Heart right ventricle (tissue), 16 donors: ENCODE measurements at regions of chr2 and their contacts with region 1.

Region 1: GRCh38 chr2:137838255-137839092 is 125.8 kb upstream of the HNMT start:
- DNase-seq: no peak
- ATAC-seq: peak in 1 of 8 donors; percentile 41
- H3K4me3 ChIP-seq: no peak overlapping the region
- H3K27ac ChIP-seq: no peak overlapping the region
- H3K4me1 ChIP-seq: no peaks in the 10 kb centered on the region
- H3K27me3 ChIP-seq: peaks cover 0 to 17% (median 5%) of the 10 kb centered on the region in 7 donors
- CTCF ChIP-seq: peak; percentile 48 to 76 (median 66)

Region 2: GRCh38 chr2:135913727-135914365 is 1924.6 kb before region 1 on chr2:
- intact Hi-C with region 1: loop called in 1 of 10 experiments (anchors 10 kb)
- DNase-seq: peak in 1 of 2 donors; percentile 29
- ATAC-seq: peak in 1 of 8 donors; percentile 21
- H3K4me3 ChIP-seq: no peak overlapping the region
- H3K27ac ChIP-seq: peak overlapping the region in 1 of 10 donors; percentile 6
- H3K4me1 ChIP-seq: no peaks in the 10 kb centered on the region
- H3K27me3 ChIP-seq: no peaks in the 10 kb centered on the region
- CTCF ChIP-seq: peak; percentile 55 to 86 (median 78)

Region 3: GRCh38 chr2:136423516-136423996 is 1414.9 kb before region 1 on chr2:
- intact Hi-C with region 1: loop called in 9 of 10 experiments (anchors 2 to 10 kb)
- DNase-seq: peak; percentile 46 to 73
- ATAC-seq: peak; percentile 86 to 95 (median 92)
- H3K4me3 ChIP-seq: peak overlapping the region in 9 of 10 donors; percentile 6 to 65 (median 45)
- H3K27ac ChIP-seq: no peak overlapping the region
- H3K4me1 ChIP-seq: peaks cover 0 to 11% (median 7%) of the 10 kb centered on the region in 9 donors
- H3K27me3 ChIP-seq: peaks cover 0 to 40% (median 28%) of the 10 kb centered on the region in 7 donors
- CTCF ChIP-seq: peak; percentile 71 to 90 (median 86)

Region 4: GRCh38 chr2:136874258-136874657 is 964.2 kb before region 1 on chr2:
- intact Hi-C with region 1: loop called in 2 of 10 experiments (anchors 5 to 10 kb)
- DNase-seq: no peak
- ATAC-seq: no peak
- H3K4me3 ChIP-seq: no peak overlapping the region
- H3K27ac ChIP-seq: no peak overlapping the region
- H3K4me1 ChIP-seq: no peaks in the 10 kb centered on the region
- H3K27me3 ChIP-seq: no peaks in the 10 kb centered on the region
- CTCF ChIP-seq: peak in 5 of 9 donors; percentile 27 to 44 (median 38)

Region 5: DNA sequence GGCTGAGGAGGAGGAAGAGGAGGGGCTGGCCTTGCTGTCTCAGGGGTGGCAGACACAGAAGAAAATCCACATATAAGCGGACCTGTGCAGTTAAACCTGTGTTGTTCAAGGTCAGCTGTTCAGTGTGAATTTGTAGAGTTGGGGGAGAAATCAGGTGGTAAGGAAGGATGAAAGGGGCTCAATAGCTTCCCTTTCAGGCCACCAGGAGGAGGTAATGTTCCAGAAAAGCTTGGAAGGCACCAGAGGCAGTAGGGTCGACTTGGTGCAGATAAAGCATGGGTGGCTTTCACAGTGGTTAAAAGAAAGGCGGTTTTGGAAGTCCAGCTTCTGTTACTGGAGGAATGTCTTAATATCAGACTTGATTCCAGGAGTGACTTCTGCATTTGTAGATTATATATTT is 905.8 kb before region 1 on chr2:
- intact Hi-C with region 1: loop called in 3 of 10 experiments (anchors 5 to 10 kb)
- DNase-seq: no peak
- ATAC-seq: no peak
- H3K4me3 ChIP-seq: no peak overlapping the region
- H3K27ac ChIP-seq: no peak overlapping the region
- H3K4me1 ChIP-seq: no peaks in the 10 kb centered on the region
- H3K27me3 ChIP-seq: no peaks in the 10 kb centered on the region
- CTCF ChIP-seq: peak in 7 of 9 donors; percentile 12 to 48 (median 38)

Region 6: DNA sequence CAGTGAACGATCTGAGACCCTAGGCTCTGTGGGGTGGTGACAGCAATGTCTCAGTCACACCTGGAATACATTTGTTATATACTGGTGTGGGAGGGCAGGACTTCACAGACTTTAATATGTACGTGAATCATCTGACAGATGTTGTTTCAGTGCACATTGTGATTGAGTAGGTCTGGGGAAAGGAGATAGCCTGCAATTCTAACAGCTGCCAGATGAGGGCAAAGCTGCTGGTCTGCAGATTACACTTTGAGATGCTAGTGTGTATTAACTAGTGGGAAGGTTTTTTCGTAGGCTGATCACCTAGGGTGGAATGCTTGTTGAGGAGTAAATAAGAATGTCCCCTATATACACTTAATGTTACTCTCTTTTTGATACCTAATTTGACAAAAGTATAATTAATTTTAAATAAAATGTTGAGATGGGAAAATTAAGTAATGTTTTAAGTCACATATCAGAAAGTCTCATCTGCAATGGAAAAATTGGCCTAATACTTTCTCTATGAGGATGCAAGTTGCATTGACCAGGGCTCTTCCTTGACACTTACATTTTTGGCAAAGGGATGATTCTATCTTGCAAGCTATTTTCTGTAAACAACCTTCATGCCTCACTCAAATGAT is 371.1 kb before region 1 on chr2:
- intact Hi-C with region 1: loop called in 6 of 10 experiments (anchors 2 to 10 kb)
- DNase-seq: peak in 1 of 2 donors; percentile 26
- ATAC-seq: peak in 2 of 8 donors; percentile 47 to 51
- H3K4me3 ChIP-seq: no peak overlapping the region
- H3K27ac ChIP-seq: no peak overlapping the region
- H3K4me1 ChIP-seq: no peaks in the 10 kb centered on the region
- H3K27me3 ChIP-seq: no peaks in the 10 kb centered on the region
- CTCF ChIP-seq: peak in 8 of 9 donors; percentile 10 to 71 (median 52)